CD14-positive monocyte (primary cell): ENCODE measurements at regions of chr20 and their contacts with region 1.

Region 1: DNA sequence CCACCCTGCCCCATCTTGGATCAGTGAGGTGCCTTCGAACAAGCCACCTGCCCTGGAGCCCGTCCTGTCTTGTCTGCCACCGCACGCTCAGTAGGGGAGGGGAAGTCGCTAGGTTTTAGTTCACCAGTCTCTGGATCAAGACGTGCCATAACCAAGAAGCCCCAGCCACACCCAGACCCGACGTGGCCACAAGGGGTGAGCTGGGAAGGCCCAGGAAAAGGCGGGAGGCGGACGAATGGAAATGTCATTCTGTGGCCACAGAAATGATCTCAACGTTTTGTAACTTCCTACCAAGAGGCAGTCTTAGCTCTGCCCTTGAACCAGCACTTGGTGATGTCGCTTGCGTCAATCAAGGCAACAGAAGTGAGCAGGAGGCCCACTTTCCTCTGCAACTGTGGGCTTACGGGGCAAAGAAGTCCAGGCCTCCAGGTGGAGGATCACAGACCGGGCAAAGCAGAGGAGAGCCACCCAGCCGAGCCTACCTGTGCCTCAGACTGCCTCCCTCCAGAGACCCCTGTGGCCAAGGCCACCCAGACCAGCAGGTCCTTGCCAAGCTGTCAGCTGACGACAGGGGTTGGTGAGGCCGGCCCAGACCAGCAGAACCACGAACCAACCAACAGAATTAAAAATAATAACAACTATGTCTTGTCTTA is 14.5 kb downstream of the GMEB2 start:
- DNase-seq: peak; percentile 82 to 85 (median 84)
- H3K4me3 ChIP-seq: peak overlapping the region in 1 of 3 experiments; percentile 51
- H3K4me3 Mint-ChIP-seq: peak overlapping the region; percentile 53 to 73
- H3K27ac ChIP-seq: peak overlapping the region; percentile 54 to 87
- H3K27ac Mint-ChIP-seq: peak overlapping the region; percentile 88 to 96 (median 93)
- H3K4me1 ChIP-seq: peaks cover 26 to 29% of the 10 kb centered on the region in 2 donors
- H3K4me1 Mint-ChIP-seq: peaks cover 38% of the 10 kb centered on the region
- H3K27me3 ChIP-seq: no peaks in the 10 kb centered on the region
- H3K27me3 Mint-ChIP-seq: peaks cover 1 to 4% (median 3%) of the 10 kb centered on the region in 3 donors
- CTCF ChIP-seq: peak; percentile 16

Region 2: DNA sequence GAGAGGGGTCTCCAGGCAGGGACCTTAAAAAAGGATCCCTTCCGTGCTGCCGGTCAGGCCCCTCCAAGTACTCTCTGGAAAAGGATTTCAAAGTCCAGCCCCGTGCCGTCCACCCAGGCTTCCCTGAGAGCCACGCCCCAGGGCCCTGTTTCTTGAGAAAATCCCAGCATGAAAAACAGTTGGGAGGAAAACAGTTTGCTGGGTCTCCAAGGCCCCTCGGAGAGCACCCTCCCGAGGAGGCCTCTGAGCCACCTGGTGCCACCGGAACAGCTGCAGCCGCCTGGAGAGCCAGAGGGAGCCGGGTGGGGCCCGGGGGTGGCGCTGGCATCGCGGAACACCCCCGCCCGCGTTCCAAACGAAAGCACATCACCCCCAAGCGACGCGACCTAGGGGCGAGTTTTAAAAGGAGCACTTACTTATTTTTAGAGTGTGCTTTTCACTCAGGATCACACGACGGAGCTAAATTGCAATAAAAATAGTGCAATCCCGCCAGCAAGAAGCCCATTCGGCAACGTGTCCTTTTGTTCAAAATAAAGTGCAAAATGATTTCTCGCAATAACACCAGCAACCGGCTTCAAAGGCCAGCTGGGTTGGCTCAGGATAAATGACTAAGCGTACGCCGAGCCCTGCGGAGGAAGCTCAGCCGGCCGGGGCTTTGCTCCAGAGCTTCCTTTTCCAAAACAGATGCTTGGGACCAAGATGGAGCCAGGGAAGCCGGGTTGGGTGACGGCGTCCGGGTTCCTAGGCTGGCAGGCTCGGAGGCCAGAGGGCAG is 460.7 kb before region 1 on chr20:
- intact Hi-C with region 1: no loop called
- DNase-seq: no peak
- H3K4me3 ChIP-seq: no peak overlapping the region
- H3K4me3 Mint-ChIP-seq: no peak overlapping the region
- H3K27ac ChIP-seq: no peak overlapping the region
- H3K27ac Mint-ChIP-seq: no peak overlapping the region
- H3K4me1 ChIP-seq: no peaks in the 10 kb centered on the region
- H3K4me1 Mint-ChIP-seq: no peaks in the 10 kb centered on the region
- H3K27me3 ChIP-seq: peaks cover 0 to 6% of the 10 kb centered on the region in 2 donors
- H3K27me3 Mint-ChIP-seq: peaks cover 5 to 21% (median 12%) of the 10 kb centered on the region in 3 donors
- CTCF ChIP-seq: no peak

Region 3: GRCh38 chr20:63520504-63520933 is 91.9 kb before region 1 on chr20 and contains the start of gene PPDPF:
- intact Hi-C with region 1: no loop called
- DNase-seq: peak; percentile 73 to 83 (median 75)
- H3K4me3 ChIP-seq: peak within 1 kb of the TSS; percentile 50 to 83 (median 68)
- H3K4me3 Mint-ChIP-seq: peak within 1 kb of the TSS; percentile 78 to 83
- H3K27ac ChIP-seq: peak within 1 kb of the TSS in 1 of 2 donors; percentile 53
- H3K27ac Mint-ChIP-seq: peak within 1 kb of the TSS; percentile 19 to 85 (median 63)
- H3K4me1 ChIP-seq: peaks cover 16 to 26% of the 10 kb centered on the region in 2 donors
- H3K4me1 Mint-ChIP-seq: peaks cover 12% of the 10 kb centered on the region
- H3K27me3 ChIP-seq: peaks cover 0 to 23% of the 10 kb centered on the region in 2 donors
- H3K27me3 Mint-ChIP-seq: peaks cover 24 to 41% (median 26%) of the 10 kb centered on the region in 3 donors
- CTCF ChIP-seq: no peak
- polyA plus RNA-seq, gene PPDPF: 13.4 to 39.9 (median 26.1) TPM

Region 4: DNA sequence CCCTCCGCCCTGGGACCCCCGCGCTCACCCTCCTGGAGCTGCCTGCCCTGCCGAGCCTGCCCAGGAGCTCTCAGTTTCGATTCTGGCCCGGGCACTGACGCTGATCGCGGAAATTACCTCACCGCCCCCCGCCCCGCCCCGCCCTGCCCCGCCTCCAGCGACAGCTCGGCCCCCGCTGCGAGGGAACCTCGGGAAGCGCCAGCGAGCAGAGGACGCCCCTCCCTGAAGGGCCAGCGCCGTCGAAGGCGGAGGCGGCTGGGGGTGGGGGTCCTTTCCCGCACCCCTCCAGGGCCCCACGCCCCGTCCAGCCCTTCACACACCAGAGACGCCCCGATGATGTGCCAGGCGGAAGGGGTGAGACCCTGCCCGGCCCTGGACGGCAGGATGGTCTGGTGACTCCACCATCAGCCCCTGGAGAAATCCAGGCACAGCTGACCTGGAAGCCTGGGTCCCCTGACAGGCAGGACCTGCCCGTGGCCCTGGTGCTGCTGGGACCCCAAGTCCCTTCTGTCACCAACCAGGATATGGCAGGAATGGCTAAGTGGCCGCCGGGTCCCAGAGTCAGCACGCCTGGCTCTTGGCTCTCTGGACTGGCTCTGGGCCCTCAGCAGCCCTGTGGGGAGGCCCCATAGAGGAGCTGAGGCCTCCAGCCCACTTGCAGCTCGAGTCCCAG is 38.1 kb before region 1 on chr20 and contains the start of gene HELZ2:
- intact Hi-C with region 1: loop called (anchors 2 to 5 kb)
- DNase-seq: peak; percentile 63 to 77 (median 69)
- H3K4me3 ChIP-seq: peak within 1 kb of the TSS; percentile 76 to 93 (median 92)
- H3K4me3 Mint-ChIP-seq: peak within 1 kb of the TSS; percentile 88 to 92
- H3K27ac ChIP-seq: peak within 1 kb of the TSS; percentile 31 to 80
- H3K27ac Mint-ChIP-seq: peak within 1 kb of the TSS; percentile 85 to 94 (median 87)
- H3K4me1 ChIP-seq: peaks cover 26 to 38% of the 10 kb centered on the region in 2 donors
- H3K4me1 Mint-ChIP-seq: peaks cover 17% of the 10 kb centered on the region
- H3K27me3 ChIP-seq: peaks cover 0 to 59% of the 10 kb centered on the region in 2 donors
- H3K27me3 Mint-ChIP-seq: peaks cover 35 to 79% (median 48%) of the 10 kb centered on the region in 3 donors
- CTCF ChIP-seq: no peak
- polyA plus RNA-seq, gene HELZ2: 3.0 to 15.5 (median 3.3) TPM

Region 5: DNA sequence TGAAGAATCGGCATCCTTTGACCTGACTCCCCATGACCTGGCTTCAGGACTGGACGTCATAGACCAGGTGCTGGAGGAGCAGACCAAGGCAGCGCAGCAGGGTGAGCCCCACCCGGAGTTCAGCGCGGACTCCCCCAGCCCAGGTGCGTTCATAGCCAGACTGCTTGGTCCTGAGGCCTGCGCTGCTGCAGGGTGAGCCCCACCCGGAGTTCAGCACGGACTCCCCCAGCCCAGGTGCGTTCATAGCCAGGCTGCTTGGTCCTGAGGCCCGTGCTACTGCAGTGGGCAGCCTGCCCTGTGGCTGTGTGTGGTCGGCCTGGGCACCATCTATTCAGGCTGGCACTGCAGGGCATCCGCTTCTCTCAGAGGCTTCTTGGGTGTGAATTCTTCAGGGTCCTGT is 61.5 kb after region 1 on chr20:
- intact Hi-C with region 1: no loop called
- DNase-seq: no peak
- H3K4me3 ChIP-seq: no peak overlapping the region
- H3K4me3 Mint-ChIP-seq: no peak overlapping the region
- H3K27ac ChIP-seq: no peak overlapping the region
- H3K27ac Mint-ChIP-seq: no peak overlapping the region
- H3K4me1 ChIP-seq: no peaks in the 10 kb centered on the region
- H3K4me1 Mint-ChIP-seq: no peaks in the 10 kb centered on the region
- H3K27me3 ChIP-seq: no peaks in the 10 kb centered on the region
- H3K27me3 Mint-ChIP-seq: peaks cover 0 to 2% (median 0%) of the 10 kb centered on the region in 3 donors
- CTCF ChIP-seq: no peak